Naive thymus-derived CD4-positive, alpha-beta T cell (primary cell): ENCODE measurements at regions of chr4 and their contacts with region 1.

Region 1: DNA sequence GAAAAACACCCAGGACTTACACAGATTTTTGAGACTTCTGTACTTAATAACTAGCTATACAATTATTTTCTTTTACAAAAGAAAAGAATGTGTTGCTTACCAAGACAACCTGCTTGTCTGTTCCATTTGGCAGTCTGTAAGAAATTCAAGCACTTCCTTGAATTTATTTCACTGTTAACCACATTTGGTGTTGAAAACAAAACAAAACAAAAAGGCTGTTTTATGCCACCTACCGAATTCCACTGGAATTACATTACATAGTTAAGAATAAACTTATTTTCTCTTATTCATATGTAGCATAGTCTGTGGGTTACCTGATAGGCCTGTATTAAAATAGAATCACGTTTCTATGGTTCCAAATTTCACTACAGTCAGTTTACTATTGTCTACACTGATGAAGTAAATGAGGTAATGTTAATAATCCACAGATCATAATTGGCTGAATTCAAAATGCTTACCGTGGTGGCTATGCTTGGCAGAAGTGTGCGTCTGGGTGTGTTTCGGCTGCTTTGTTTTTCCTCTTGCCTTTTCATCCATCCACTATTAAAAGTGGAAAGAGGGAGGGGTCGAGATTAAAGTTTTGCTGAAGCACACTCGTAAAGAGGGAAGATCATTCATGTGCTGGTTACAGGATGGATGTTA is at the start of gene TLR1:
- DNase-seq: peak in 7 of 9 donors; percentile 50 to 76 (median 65)
- ATAC-seq: peak; percentile 88
- H3K4me3 ChIP-seq: peak within 1 kb of the TSS; percentile 51
- H3K4me3 Mint-ChIP-seq: peak within 1 kb of the TSS; percentile 87 to 95 (median 90)
- H3K27ac ChIP-seq: peak within 1 kb of the TSS; percentile 61
- H3K27ac Mint-ChIP-seq: peak within 1 kb of the TSS; percentile 87 to 99 (median 94)
- H3K4me1 ChIP-seq: peaks cover 8 to 12% of the 10 kb centered on the region in 2 donors
- H3K4me1 Mint-ChIP-seq: peaks cover 27 to 46% (median 39%) of the 10 kb centered on the region in 7 donors
- H3K27me3 ChIP-seq: no peaks in the 10 kb centered on the region
- H3K27me3 Mint-ChIP-seq: peaks cover 0 to 2% (median 0%) of the 10 kb centered on the region in 5 donors
- total RNA-seq, gene TLR1: 11.8 to 41.9 (median 17.7) TPM

Region 2: DNA sequence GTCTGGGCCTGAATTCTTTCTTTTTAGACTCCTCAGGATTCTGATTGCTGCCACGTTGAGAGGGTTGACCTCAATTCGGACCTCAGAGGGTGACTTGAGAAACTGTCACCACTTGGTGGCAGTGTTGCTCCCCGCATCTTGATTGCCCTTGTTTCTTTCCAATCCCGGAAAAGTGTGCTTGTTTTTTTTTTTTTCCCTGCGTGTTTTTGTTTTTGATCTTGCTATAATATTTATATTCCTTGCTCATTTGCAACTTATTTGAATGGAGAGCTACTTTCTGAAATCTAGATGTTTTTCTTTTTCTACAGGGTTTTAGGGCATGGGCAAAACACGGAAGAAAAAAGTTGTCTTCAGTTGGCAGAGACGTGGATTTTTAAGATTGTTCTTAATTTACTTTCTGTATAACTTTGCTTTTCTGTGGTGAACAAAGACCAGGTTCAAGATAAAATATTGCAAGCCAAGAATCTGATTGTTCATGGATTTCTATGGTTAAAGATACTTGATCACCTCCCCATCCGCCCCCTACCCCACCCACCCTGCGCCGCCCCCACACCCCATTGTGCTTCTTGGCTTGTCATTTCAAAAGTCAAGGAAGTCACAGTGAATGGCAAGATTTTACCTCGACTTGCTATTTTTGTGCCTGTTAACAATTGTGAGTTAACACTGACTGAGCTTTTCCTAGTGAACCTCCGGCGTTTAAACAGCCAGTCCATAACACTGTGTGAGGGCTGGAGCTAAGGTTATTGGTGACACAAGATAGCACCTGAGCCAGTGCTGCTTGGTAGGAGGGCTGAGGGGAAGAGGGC is 742.5 kb before region 1 on chr4:
- CTCF ChIA-PET with region 1: interaction called, 5 read pairs
- POLR2A ChIA-PET with region 1: no interaction called
- intact Hi-C with region 1: loop called in 1 of 2 experiments (anchors 1 kb)
- DNase-seq: peak; percentile 15 to 55 (median 41)
- ATAC-seq: peak; percentile 78
- H3K4me3 ChIP-seq: peak overlapping the region; percentile 33
- H3K4me3 Mint-ChIP-seq: peak overlapping the region; percentile 66 to 95 (median 84)
- H3K27ac ChIP-seq: no peak overlapping the region
- H3K27ac Mint-ChIP-seq: peak overlapping the region in 8 of 9 donors; percentile 35 to 80 (median 61)
- H3K4me1 ChIP-seq: no peaks in the 10 kb centered on the region
- H3K4me1 Mint-ChIP-seq: peaks cover 0 to 20% (median 10%) of the 10 kb centered on the region in 7 donors
- H3K27me3 ChIP-seq: no peaks in the 10 kb centered on the region
- H3K27me3 Mint-ChIP-seq: no peaks in the 10 kb centered on the region

Region 3: DNA sequence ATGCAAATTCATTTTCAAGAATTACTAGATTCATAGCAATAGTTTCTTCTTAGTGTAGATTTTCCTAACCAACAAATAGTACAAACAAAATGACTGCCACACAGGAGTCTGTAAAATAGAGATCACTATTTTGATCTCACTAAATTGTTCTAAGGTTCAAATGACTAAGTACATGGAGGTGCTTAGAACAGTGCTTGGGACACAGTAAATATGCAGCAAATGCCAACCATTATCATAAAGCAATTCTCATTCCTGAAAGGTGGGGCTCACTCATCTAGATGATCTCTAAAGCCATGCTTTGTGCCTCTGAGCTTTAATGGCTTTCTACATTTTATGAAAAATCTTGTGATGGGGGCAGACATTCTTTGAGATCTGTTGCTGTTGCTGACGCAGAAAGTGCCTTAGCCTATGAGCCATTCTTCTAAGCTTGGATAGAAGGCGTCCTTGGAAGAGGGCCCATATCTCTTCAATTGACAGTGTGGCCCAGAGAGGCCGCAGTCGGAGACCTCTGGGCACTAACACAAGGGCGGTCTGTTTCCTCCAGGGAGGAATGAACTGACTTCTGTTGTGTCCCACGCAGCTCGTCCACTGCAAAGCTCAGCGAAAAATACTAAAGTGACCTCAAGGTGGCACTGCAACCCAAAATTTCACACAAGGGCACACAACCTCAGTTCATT is 45.5 kb before region 1 on chr4:
- CTCF ChIA-PET with region 1: interaction called, 41 read pairs
- POLR2A ChIA-PET with region 1: interaction called, 5 read pairs
- intact Hi-C with region 1: loop called (anchors 1 kb)
- DNase-seq: peak; percentile 29 to 66 (median 58)
- ATAC-seq: peak; percentile 64
- H3K4me3 ChIP-seq: no peak overlapping the region
- H3K4me3 Mint-ChIP-seq: no peak overlapping the region
- H3K27ac ChIP-seq: no peak overlapping the region
- H3K27ac Mint-ChIP-seq: peak overlapping the region in 2 of 9 donors; percentile 10 to 41
- H3K4me1 ChIP-seq: peaks cover 0 to 5% of the 10 kb centered on the region in 2 donors
- H3K4me1 Mint-ChIP-seq: peaks cover 8 to 31% (median 19%) of the 10 kb centered on the region in 7 donors
- H3K27me3 ChIP-seq: no peaks in the 10 kb centered on the region
- H3K27me3 Mint-ChIP-seq: no peaks in the 10 kb centered on the region

Region 4: GRCh38 chr4:38782452-38783108 is 22.2 kb before region 1 on chr4 and contains the start of gene TLR10:
- CTCF ChIA-PET with region 1: interaction called, 22 read pairs
- POLR2A ChIA-PET with region 1: no interaction called
- intact Hi-C with region 1: loop called (anchors 1 kb)
- DNase-seq: peak in 7 of 9 donors; percentile 10 to 56 (median 43)
- ATAC-seq: peak; percentile 79
- H3K4me3 ChIP-seq: no peak within 1 kb of the TSS
- H3K4me3 Mint-ChIP-seq: peak within 1 kb of the TSS in 3 of 10 donors; percentile 3 to 58 (median 49)
- H3K27ac ChIP-seq: no peak within 1 kb of the TSS
- H3K27ac Mint-ChIP-seq: no peak within 1 kb of the TSS
- H3K4me1 ChIP-seq: no peaks in the 10 kb centered on the region
- H3K4me1 Mint-ChIP-seq: peaks cover 0 to 7% (median 6%) of the 10 kb centered on the region in 7 donors
- H3K27me3 ChIP-seq: no peaks in the 10 kb centered on the region
- H3K27me3 Mint-ChIP-seq: peaks cover 0 to 8% (median 0%) of the 10 kb centered on the region in 5 donors
- total RNA-seq, gene TLR10: 0.13 to 1.6 (median 0.58) TPM in 4 of 5 experiments, not detected in the other

Region 5: DNA sequence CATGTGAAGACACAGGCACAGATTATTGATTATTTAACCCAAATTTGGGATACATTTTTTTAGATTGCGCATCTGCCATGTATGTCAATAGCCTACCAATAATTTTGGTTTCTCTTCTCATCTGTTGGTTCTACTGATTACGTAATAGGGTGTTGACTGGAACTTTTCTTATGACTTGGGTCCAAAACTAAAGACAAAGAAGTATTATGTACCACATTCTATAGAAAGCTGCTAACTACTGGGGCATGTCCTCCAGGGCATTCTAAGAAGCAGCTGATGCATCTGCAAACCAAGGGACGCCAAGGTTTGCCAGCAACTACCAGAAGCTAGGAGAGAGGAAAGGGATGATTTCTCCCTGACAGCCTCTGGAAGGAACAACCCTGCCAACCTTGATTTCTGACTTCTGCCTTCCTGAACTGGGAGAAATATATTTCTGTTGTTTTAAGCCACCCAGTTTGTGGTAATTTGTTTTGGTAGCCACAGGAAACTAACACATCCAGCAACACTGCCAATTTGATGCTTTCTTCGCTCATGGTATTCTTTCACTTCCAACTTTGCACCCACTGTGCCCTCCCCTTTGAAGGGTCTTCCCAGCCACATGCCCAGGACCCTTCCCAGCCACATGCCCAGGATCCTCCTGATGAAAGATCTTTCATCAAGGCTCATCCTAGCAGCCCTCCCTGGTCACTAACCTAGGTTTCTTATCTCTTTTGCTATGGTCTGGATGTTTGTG is 15.7 kb after region 1 on chr4:
- CTCF ChIA-PET with region 1: interaction called, 4 read pairs
- POLR2A ChIA-PET with region 1: no interaction called
- intact Hi-C with region 1: loop called in 1 of 2 experiments (anchors 2 kb)
- DNase-seq: no peak
- ATAC-seq: no peak
- H3K4me3 ChIP-seq: no peak overlapping the region
- H3K4me3 Mint-ChIP-seq: peak overlapping the region in 2 of 10 donors; percentile 13 to 31
- H3K27ac ChIP-seq: no peak overlapping the region
- H3K27ac Mint-ChIP-seq: no peak overlapping the region
- H3K4me1 ChIP-seq: no peaks in the 10 kb centered on the region
- H3K4me1 Mint-ChIP-seq: peaks cover 0 to 24% (median 10%) of the 10 kb centered on the region in 7 donors
- H3K27me3 ChIP-seq: no peaks in the 10 kb centered on the region
- H3K27me3 Mint-ChIP-seq: peaks cover 0 to 5% (median 0%) of the 10 kb centered on the region in 5 donors

Region 6: DNA sequence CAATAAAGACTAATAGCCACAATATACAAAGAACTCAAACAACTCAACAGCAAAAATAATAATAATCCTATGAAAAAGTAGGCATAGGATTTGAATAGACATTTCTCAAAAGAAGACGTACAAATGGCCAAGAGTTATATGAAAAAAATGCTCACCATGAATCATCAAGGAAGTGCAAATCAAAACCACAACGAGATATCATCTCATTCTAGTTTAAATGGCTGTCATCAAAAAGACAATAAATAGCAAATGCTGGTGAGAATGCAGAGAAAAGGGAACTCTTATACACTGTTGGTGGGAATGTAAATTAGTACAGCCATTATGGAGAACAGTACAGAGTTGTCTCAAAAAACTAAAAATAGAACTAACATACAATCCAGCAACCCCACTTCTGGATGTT is 33.1 kb after region 1 on chr4:
- CTCF ChIA-PET with region 1: no interaction called
- POLR2A ChIA-PET with region 1: interaction called, 3 read pairs
- intact Hi-C with region 1: loop called in 1 of 2 experiments (anchors 1 kb)
- DNase-seq: peak in 7 of 9 donors; percentile 23 to 56 (median 43)
- ATAC-seq: peak; percentile 72
- H3K4me3 ChIP-seq: no peak overlapping the region
- H3K4me3 Mint-ChIP-seq: peak overlapping the region in 9 of 10 donors; percentile 0 to 64 (median 36)
- H3K27ac ChIP-seq: no peak overlapping the region
- H3K27ac Mint-ChIP-seq: peak overlapping the region in 8 of 9 donors; percentile 1 to 39 (median 18)
- H3K4me1 ChIP-seq: peaks cover 7 to 16% of the 10 kb centered on the region in 2 donors
- H3K4me1 Mint-ChIP-seq: peaks cover 16 to 25% (median 21%) of the 10 kb centered on the region in 7 donors
- H3K27me3 ChIP-seq: no peaks in the 10 kb centered on the region
- H3K27me3 Mint-ChIP-seq: no peaks in the 10 kb centered on the region